ENCODE measurements at regions of chr5 and their contacts with region 1.

Region 1: DNA sequence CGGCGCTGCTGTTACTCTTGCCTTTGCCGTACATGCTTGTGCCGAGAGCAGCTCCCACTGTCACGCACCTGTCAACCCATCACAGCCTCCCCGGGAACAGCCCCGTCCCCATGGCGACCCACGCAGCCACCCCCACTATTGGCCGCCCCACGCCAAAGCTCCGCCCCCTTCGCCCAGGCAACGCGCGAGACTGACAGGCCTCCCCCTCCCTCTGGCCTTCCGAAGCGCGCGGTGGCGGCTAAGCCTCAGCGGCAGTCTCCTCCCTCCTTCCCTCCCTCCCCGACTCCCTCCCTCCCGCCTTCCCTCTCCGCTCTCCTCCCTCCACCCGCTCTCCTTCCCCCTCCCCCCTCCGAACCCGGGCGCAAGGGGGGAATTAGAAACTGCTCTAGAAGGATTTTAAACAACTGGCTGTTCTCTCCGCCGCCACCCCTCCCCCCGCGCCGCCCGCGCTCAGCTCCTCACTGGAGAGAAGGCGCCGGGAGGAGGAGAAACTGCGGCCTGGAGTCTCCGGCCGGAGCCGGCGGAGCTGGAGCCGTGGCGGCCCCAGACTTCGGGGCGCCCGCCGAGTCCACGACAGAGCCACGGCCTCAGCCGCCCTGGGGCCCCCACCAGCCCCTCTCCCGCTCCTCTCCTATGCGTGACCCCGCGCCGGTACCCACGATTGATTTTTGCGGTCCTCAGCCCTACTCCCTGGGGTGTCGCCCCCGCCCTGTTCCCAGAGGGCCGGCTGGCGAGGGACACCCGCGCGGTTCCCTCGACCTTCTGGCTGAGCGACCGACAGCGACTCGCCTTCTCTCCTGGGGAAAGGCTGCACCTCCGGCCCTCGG is at the start of gene SSBP2:
- DNase-seq: peak; percentile 98
- H3K4me3 ChIP-seq: peak within 1 kb of the TSS; percentile 82 to 88
- H3K27ac ChIP-seq: peak within 1 kb of the TSS; percentile 97 to 100
- H3K4me1 ChIP-seq: peaks cover 6% of the 10 kb centered on the region
- H3K27me3 ChIP-seq: no peaks in the 10 kb centered on the region
- CTCF ChIP-seq: peak in 1 of 4 experiments; percentile 12
- POLR2A ChIP-seq: peak; percentile 87
- total RNA-seq, gene SSBP2: 25.1 to 26.9 TPM

Region 2: DNA sequence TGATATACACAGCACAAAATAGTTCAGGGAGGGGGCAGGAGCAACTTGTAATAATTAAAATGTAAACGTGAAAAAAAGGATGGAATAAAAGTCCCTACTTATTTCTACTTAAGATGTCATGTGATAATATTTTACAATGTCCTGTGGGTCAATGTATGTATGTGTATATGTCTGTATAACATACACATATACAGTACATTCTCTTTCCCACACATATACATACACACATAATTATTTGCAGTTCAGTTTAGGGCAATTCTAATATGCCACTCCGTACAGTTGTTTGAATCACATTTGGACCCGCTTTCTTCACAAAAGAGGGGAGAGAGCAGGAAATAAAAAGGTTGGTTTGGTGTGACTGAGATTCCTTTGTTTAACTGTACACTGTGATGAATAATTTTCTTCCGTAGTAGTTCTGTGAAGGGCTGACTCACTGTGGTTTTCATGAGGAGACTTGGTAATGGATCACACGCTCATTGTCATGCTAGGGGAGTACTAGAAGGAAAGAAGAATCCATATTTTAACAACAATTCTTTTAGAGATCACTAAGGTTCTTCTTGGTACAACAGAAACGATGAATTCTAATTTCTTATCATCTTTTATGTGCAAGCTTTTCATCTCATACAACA is 331.1 kb before region 1 on chr5:
- intact Hi-C with region 1: loop called (anchors 5 kb)
- DNase-seq: no peak
- H3K4me3 ChIP-seq: no peak overlapping the region
- H3K27ac ChIP-seq: no peak overlapping the region
- H3K4me1 ChIP-seq: no peaks in the 10 kb centered on the region
- H3K27me3 ChIP-seq: no peaks in the 10 kb centered on the region
- CTCF ChIP-seq: no peak
- POLR2A ChIP-seq: no peak

Region 3: GRCh38 chr5:81787474-81788242 is 36.4 kb after region 1 on chr5:
- intact Hi-C with region 1: loop called (anchors 1 kb)
- DNase-seq: peak; percentile 62
- H3K4me3 ChIP-seq: no peak overlapping the region
- H3K27ac ChIP-seq: no peak overlapping the region
- H3K4me1 ChIP-seq: no peaks in the 10 kb centered on the region
- H3K27me3 ChIP-seq: no peaks in the 10 kb centered on the region
- CTCF ChIP-seq: no peak
- POLR2A ChIP-seq: no peak

Region 4: GRCh38 chr5:81971712-81972495 is 220.7 kb after region 1 on chr5 and contains the start of gene ATG10:
- intact Hi-C with region 1: loop called (anchors 5 kb)
- DNase-seq: peak; percentile 87
- H3K4me3 ChIP-seq: peak within 1 kb of the TSS; percentile 68 to 79
- H3K27ac ChIP-seq: peak within 1 kb of the TSS; percentile 98
- H3K4me1 ChIP-seq: no peaks in the 10 kb centered on the region
- H3K27me3 ChIP-seq: no peaks in the 10 kb centered on the region
- CTCF ChIP-seq: no peak
- POLR2A ChIP-seq: peak; percentile 94
- total RNA-seq, gene ATG10: 3.2 to 16.7 TPM

Region 5: GRCh38 chr5:82158755-82159413 is 407.7 kb after region 1 on chr5:
- intact Hi-C with region 1: no loop called
- DNase-seq: no peak
- H3K4me3 ChIP-seq: no peak overlapping the region
- H3K27ac ChIP-seq: no peak overlapping the region
- H3K4me1 ChIP-seq: no peaks in the 10 kb centered on the region
- H3K27me3 ChIP-seq: no peaks in the 10 kb centered on the region
- CTCF ChIP-seq: no peak
- POLR2A ChIP-seq: no peak

Region 6: DNA sequence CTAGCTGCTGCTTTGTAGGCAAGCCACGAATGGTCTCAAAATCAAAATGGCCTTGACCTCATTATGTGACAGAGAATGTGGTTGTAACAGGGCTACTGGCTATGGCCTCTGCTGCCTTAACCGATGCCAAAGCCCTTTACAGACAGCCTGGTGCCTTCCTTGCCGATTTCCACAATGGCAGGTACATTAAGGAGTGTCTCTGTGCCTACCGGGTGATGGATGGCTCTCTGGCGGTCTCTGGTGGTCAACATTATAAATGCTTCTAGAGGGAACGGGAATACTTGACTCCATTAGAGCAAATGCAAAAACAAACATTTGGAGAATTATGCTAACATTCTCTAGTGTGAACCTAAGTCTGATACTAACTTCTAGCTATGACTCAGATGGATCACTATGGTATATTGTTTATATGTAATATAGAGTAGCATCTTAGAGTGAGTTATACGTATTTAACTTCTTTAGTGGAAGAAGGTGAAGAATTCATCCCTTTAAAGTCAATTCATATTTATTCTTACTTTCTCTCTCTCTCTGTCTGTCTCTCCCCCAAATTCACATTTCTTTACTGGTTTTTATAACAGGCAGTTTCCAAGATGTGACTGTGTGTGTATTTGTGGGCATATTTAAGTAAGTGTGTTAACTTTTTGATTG is 474.4 kb after region 1 on chr5:
- intact Hi-C with region 1: loop called (anchors 5 kb)
- DNase-seq: peak; percentile 48
- H3K4me3 ChIP-seq: no peak overlapping the region
- H3K27ac ChIP-seq: no peak overlapping the region
- H3K4me1 ChIP-seq: no peaks in the 10 kb centered on the region
- H3K27me3 ChIP-seq: no peaks in the 10 kb centered on the region
- CTCF ChIP-seq: peak; percentile 58 to 75 (median 70)
- POLR2A ChIP-seq: no peak

Measured in prostate gland (tissue), 2 donors.